Natural killer cell (primary cell): ENCODE measurements at regions of chr21 and their contacts with region 1.

Region 1: GRCh38 chr21:33947451-33948095 is 32.0 kb upstream of the ATP5PO start:
- DNase-seq: peak; percentile 75 to 95
- ATAC-seq: peak; percentile 47 to 76 (median 63)
- H3K4me3 ChIP-seq: peak overlapping the region; percentile 6
- H3K4me3 Mint-ChIP-seq: peak overlapping the region; percentile 76
- H3K27ac ChIP-seq: peak overlapping the region; percentile 98
- H3K27ac Mint-ChIP-seq: peak overlapping the region; percentile 96 to 99
- H3K4me1 ChIP-seq: peaks cover 58% of the 10 kb centered on the region
- H3K4me1 Mint-ChIP-seq: peaks cover 63 to 72% of the 10 kb centered on the region in 2 donors
- H3K27me3 ChIP-seq: no peaks in the 10 kb centered on the region
- H3K27me3 Mint-ChIP-seq: no peaks in the 10 kb centered on the region
- CTCF ChIP-seq: no peak

Region 2: GRCh38 chr21:33904041-33904440 is 43.5 kb before region 1 on chr21:
- intact Hi-C with region 1: no loop called
- DNase-seq: no peak
- ATAC-seq: no peak
- H3K4me3 ChIP-seq: no peak overlapping the region
- H3K4me3 Mint-ChIP-seq: no peak overlapping the region
- H3K27ac ChIP-seq: no peak overlapping the region
- H3K27ac Mint-ChIP-seq: no peak overlapping the region
- H3K4me1 ChIP-seq: no peaks in the 10 kb centered on the region
- H3K4me1 Mint-ChIP-seq: no peaks in the 10 kb centered on the region
- H3K27me3 ChIP-seq: no peaks in the 10 kb centered on the region
- H3K27me3 Mint-ChIP-seq: no peaks in the 10 kb centered on the region
- CTCF ChIP-seq: no peak

Region 3: GRCh38 chr21:33915368-33916199 is 32.0 kb before region 1 on chr21 and contains the start of gene ATP5PO:
- intact Hi-C with region 1: loop called (anchors 1 kb)
- DNase-seq: peak; percentile 92 to 98
- ATAC-seq: peak; percentile 99 to 100 (median 99)
- H3K4me3 ChIP-seq: peak within 1 kb of the TSS; percentile 86
- H3K4me3 Mint-ChIP-seq: peak within 1 kb of the TSS; percentile 100
- H3K27ac ChIP-seq: peak within 1 kb of the TSS; percentile 76
- H3K27ac Mint-ChIP-seq: peak within 1 kb of the TSS; percentile 98 to 99
- H3K4me1 ChIP-seq: peaks cover 13% of the 10 kb centered on the region
- H3K4me1 Mint-ChIP-seq: peaks cover 33 to 40% of the 10 kb centered on the region in 2 donors
- H3K27me3 ChIP-seq: no peaks in the 10 kb centered on the region
- H3K27me3 Mint-ChIP-seq: no peaks in the 10 kb centered on the region
- CTCF ChIP-seq: no peak
- total RNA-seq, gene ATP5PO: 80.4 to 95.4 (median 94.9) TPM

Region 4: DNA sequence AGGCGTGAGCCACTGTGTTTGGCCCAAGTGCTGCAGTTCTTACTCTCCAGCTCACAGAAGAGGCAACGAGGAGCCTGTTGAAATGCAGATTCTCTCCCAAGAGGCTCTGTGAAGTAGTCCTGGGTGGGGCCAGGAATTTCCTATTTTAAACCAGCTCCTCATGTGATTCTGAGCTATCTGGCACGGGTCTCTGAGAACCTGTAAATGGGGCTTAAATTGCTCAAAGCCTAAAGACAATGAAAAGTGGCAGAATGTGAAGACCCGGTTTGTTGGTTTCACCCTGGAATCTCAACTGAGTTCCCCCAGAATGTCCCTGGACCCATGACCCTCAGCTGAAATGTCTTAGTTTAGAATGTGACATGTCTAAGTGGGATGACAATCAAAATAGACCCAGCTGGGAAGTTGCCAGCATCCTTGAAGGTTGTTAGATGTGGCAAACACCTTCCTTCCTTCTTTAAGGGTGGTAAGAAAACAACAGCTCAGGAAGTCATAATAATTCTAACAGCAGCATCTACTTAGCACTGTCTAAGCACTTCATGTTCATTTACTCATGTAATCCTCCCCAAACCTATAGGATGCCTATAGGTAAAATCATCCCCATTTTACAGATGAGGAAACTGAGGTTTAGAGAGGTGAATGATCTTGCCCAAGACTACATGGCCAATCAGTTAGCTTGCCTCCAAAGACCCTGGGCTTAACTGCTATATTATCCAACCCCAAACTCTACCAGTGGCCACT is 11.1 kb before region 1 on chr21:
- intact Hi-C with region 1: loop called (anchors 1 kb)
- DNase-seq: peak in 1 of 2 donors; percentile 86
- ATAC-seq: peak; percentile 49 to 63 (median 53)
- H3K4me3 ChIP-seq: no peak overlapping the region
- H3K4me3 Mint-ChIP-seq: no peak overlapping the region
- H3K27ac ChIP-seq: peak overlapping the region; percentile 61
- H3K27ac Mint-ChIP-seq: peak overlapping the region; percentile 71 to 76
- H3K4me1 ChIP-seq: peaks cover 56% of the 10 kb centered on the region
- H3K4me1 Mint-ChIP-seq: peaks cover 30 to 32% of the 10 kb centered on the region in 2 donors
- H3K27me3 ChIP-seq: no peaks in the 10 kb centered on the region
- H3K27me3 Mint-ChIP-seq: no peaks in the 10 kb centered on the region
- CTCF ChIP-seq: no peak

Region 5: DNA sequence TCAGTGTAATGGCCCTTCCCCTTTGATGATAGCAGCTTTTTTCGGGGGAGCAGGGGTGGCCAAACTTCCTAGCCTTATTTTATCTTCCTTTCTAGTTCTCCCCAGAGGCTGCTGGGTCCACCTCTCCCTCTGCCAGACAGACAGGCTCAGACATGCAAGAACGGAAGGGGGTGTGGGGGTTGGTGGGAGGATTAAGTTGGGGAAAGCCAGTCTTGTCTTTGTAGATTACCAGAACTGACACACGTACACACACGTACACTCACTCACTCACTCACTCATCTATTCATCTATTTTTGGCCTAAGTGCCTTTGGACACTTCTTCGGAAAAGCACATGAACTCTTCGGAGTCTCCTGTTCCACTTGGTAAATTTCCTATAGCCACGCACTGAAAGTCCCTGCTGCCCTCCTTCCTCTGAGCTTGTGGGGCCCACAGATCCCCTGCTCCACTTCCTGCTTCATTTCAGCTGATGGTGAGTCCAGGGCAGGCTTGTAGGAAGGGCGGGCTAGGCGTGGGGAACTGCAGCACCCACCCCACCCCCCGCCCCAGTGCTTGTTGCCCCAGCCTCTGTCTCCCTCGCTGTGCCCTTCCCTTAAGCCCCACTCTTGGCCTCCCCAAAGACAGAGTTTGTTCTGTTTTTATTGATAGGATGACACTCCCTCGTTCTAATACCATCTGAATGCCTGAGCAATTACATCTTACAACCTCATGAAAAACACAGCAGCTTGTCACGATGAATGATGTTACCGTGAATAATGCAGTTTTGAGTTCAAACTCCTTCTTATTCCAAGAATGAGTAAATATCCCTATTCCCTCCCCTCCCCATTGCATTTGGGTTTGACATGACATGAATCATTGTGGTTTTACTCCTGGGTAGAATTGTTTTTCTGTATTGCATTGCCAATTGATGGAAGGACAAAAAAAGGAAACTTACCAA is 28.8 kb after region 1 on chr21:
- intact Hi-C with region 1: loop called (anchors 1 kb)
- DNase-seq: peak; percentile 26 to 75
- ATAC-seq: peak; percentile 43 to 60 (median 53)
- H3K4me3 ChIP-seq: no peak overlapping the region
- H3K4me3 Mint-ChIP-seq: peak overlapping the region; percentile 76
- H3K27ac ChIP-seq: peak overlapping the region; percentile 95
- H3K27ac Mint-ChIP-seq: peak overlapping the region; percentile 93 to 98
- H3K4me1 ChIP-seq: peaks cover 44% of the 10 kb centered on the region
- H3K4me1 Mint-ChIP-seq: peaks cover 61 to 66% of the 10 kb centered on the region in 2 donors
- H3K27me3 ChIP-seq: no peaks in the 10 kb centered on the region
- H3K27me3 Mint-ChIP-seq: no peaks in the 10 kb centered on the region
- CTCF ChIP-seq: no peak

Region 6: GRCh38 chr21:34073032-34073869 is 125.7 kb after region 1 on chr21 and contains the starts of genes MRPS6 and SLC5A3:
- intact Hi-C with region 1: loop called (anchors 2 kb)
- DNase-seq: peak; percentile 70 to 86
- ATAC-seq: peak; percentile 76 to 87 (median 79)
- H3K4me3 ChIP-seq: peak within 1 kb of the TSS; percentile 76
- H3K4me3 Mint-ChIP-seq: peak within 1 kb of the TSS; percentile 95
- H3K27ac ChIP-seq: peak within 1 kb of the TSS; percentile 80
- H3K27ac Mint-ChIP-seq: peak within 1 kb of the TSS; percentile 86 to 89
- H3K4me1 ChIP-seq: peaks cover 21% of the 10 kb centered on the region
- H3K4me1 Mint-ChIP-seq: peaks cover 50 to 54% of the 10 kb centered on the region in 2 donors
- H3K27me3 ChIP-seq: no peaks in the 10 kb centered on the region
- H3K27me3 Mint-ChIP-seq: no peaks in the 10 kb centered on the region
- CTCF ChIP-seq: no peak
- total RNA-seq, gene MRPS6: 42.7 to 54.5 (median 44.3) TPM
- total RNA-seq, gene SLC5A3: 14.5 to 25.1 (median 17.9) TPM